ENCODE measurements at regions of chr11 and their contacts with region 1.

Region 1: DNA sequence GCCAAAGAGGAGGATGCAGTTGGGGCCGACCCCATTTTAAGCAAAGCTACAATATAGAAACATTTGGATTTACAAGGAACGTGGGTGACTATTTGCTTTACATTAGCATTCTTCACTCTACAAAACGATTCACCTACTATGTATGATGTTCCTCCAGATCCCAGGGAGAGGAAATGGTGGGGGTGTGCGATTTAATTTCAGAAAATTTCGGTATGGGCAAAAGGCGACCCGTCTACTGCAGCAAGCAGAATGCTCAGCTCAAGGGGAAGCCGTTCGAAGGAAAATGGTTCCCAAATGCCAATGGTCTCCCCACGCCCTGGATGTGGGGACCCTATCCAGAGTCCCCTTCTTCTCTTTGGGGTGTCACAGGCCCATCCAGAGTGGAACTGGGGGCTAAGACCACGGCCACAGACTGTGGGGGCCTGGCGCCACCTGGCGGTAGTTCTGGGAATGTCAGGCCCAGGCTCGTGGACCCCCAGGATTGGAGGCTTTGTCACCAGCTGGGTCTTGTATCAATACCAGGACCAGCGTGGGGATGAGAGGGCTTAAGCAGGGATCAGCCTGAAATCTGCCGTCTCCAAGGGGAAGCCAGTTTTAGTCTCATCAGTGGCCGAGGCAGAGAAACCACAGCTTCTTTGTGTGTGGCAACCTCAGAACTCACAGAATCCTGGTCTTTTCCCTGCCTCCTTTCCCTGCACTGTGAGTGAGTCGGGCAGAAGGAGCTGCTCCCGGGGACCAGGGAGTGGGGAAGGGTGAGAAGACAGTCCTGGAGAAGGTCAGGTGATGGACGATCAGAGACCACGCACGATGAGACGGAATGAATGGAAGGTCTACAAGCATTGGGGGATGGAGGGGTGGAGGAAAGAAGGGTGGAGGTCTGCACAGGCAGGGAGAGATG is 8.4 kb downstream of the LRRC10B start:
- DNase-seq: peak; percentile 58
- H3K4me3 Mint-ChIP-seq: no peak overlapping the region
- H3K27ac Mint-ChIP-seq: no peak overlapping the region
- H3K4me1 Mint-ChIP-seq: peaks cover 7% of the 10 kb centered on the region
- H3K27me3 Mint-ChIP-seq: peaks cover 42% of the 10 kb centered on the region

Region 2: DNA sequence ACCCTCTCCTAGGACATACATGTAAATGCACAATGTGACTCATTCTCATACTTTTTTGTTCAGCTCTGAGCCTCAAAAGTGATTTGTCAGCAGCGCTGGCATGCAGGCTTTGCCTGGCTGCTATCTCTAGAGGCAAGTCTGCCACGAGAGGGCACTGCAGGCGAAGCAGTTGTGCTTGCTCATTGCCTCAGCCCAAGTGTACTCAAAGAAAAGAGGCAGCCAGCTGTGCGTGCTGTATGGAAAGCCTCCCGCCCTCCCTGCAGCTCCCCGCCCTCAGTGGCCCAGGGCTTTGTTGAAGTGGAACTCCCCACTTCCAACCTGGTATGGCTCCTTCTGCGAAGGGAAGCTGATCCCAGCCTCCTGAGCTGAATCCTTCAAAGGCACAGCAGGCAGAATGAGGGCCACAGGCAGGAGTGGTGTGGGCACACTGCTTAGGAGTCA is 70.7 kb before region 1 on chr11:
- CTCF ChIA-PET with region 1: interaction called, 54 read pairs
- DNase-seq: peak; percentile 88
- H3K4me3 Mint-ChIP-seq: no peak overlapping the region
- H3K27ac Mint-ChIP-seq: no peak overlapping the region
- H3K4me1 Mint-ChIP-seq: peaks cover 4% of the 10 kb centered on the region
- H3K27me3 Mint-ChIP-seq: no peaks in the 10 kb centered on the region

Region 3: GRCh38 chr11:61477727-61478148 is 39.2 kb before region 1 on chr11:
- CTCF ChIA-PET with region 1: interaction called, 141 read pairs
- DNase-seq: peak; percentile 68
- H3K4me3 Mint-ChIP-seq: no peak overlapping the region
- H3K27ac Mint-ChIP-seq: no peak overlapping the region
- H3K4me1 Mint-ChIP-seq: peaks cover 7% of the 10 kb centered on the region
- H3K27me3 Mint-ChIP-seq: peaks cover 3% of the 10 kb centered on the region

Region 4: DNA sequence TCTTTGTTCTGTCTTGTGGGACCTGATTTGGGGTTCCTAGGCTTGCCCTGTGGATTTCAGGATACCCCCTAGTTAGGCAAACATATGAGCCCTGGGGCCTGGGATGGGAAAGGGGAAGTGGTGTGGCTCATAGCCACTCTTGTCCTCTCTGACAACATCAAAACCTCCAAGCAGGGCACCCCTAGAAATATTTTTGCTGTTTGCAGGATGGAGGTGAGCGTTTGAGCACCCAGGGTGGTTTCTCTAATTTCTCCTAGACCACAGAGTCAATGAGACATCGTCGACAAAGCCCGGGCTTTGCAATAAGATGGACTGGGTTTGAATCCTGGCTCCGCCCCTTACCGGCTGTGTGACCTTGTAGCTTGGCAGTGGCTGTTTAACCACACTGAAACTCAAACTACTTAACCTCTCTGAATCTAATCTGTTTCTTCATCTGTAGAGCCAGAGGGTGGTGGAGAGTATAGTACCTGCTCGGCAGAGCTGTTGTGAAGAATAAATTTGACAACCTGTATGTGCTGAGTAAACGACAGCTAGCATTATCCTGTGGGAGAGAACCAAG is 13.6 kb before region 1 on chr11:
- CTCF ChIA-PET with region 1: interaction called, 10 read pairs
- DNase-seq: no peak
- H3K4me3 Mint-ChIP-seq: no peak overlapping the region
- H3K27ac Mint-ChIP-seq: no peak overlapping the region
- H3K4me1 Mint-ChIP-seq: peaks cover 7% of the 10 kb centered on the region
- H3K27me3 Mint-ChIP-seq: peaks cover 53% of the 10 kb centered on the region

Region 5: GRCh38 chr11:61526956-61527731 is 10.2 kb after region 1 on chr11:
- CTCF ChIA-PET with region 1: interaction called, 15 read pairs
- DNase-seq: no peak
- H3K4me3 Mint-ChIP-seq: no peak overlapping the region
- H3K27ac Mint-ChIP-seq: no peak overlapping the region
- H3K4me1 Mint-ChIP-seq: no peaks in the 10 kb centered on the region
- H3K27me3 Mint-ChIP-seq: peaks cover 51% of the 10 kb centered on the region

Region 6: DNA sequence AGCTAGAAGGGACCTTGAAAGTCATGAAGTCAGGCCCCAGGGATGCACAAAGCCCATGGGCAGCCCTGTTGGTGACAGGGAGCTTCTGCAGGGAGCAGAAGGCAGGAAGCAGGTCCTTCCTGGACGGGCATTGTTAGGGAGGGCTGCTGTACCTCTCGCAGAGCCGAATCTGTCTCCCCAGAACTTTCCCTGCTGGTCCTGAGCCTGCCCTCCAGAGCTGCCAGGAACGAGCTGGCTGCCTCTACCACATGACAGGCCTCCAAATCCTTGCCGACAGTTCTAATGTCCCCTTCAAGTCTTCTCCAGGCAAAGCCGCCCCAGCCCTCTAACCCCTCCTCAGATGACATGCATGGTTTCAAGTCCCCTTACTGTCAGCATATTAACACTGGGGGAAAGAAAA is 43.8 kb after region 1 on chr11:
- CTCF ChIA-PET with region 1: interaction called, 11 read pairs
- DNase-seq: no peak
- H3K4me3 Mint-ChIP-seq: no peak overlapping the region
- H3K27ac Mint-ChIP-seq: no peak overlapping the region
- H3K4me1 Mint-ChIP-seq: no peaks in the 10 kb centered on the region
- H3K27me3 Mint-ChIP-seq: peaks cover 58% of the 10 kb centered on the region

Region 7: GRCh38 chr11:61742393-61742792 is 225.5 kb after region 1 on chr11:
- CTCF ChIA-PET with region 1: no interaction called
- DNase-seq: no peak
- H3K4me3 Mint-ChIP-seq: no peak overlapping the region
- H3K27ac Mint-ChIP-seq: no peak overlapping the region
- H3K4me1 Mint-ChIP-seq: no peaks in the 10 kb centered on the region
- H3K27me3 Mint-ChIP-seq: no peaks in the 10 kb centered on the region

Measured in activated naive CD4-positive, alpha-beta T cell treated with anti-CD3 and anti-CD28 coated beads, Interleukin-2, amount 10 ng/mL, durations not matched to agents 7 days and 5 days (primary cell).